Right cardiac atrium (tissue), 5 donors: ENCODE measurements at regions of chr5 and their contacts with region 1.

Region 1: DNA sequence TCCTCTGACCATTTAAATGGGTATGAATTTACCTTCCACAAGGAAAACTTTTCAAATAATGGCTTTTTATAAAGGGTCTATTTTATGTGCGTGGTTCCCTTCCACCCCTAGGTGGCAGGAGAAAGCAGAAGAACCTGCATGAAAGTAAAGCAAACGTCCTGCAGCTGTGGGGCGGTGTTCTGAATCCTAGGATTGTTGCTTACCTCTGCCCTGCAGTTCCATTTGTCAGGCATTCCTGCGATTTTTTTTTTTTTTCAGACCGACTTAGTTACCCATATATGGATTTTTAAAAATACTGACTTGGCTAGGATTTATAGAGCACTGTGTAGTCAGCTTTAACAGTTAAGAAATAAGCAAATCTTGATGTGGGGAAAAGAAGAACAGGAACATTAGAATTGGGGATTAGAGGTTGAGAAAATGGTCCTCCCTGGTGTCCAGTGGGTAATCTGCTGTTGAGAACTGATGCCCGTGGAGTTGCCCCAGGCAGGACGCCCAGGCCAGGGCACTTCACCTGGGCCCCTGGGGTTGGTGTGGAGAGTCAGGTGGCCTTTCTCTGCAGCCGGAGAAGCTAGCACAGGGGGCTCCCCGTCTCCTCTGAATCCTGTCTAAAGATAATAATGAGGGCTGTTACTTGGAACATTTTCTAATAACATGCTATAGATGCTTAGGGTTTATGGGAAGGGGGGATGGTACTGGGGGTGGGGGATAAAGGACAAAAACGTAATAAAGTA is 30.4 kb upstream of the LTC4S start:
- DNase-seq: peak; percentile 48 to 82 (median 59)
- ATAC-seq: peak; percentile 65 to 69
- H3K4me3 ChIP-seq: no peak overlapping the region
- H3K27ac ChIP-seq: no peak overlapping the region
- H3K4me1 ChIP-seq: peaks cover 18% of the 10 kb centered on the region
- H3K27me3 ChIP-seq: no peaks in the 10 kb centered on the region

Region 2: DNA sequence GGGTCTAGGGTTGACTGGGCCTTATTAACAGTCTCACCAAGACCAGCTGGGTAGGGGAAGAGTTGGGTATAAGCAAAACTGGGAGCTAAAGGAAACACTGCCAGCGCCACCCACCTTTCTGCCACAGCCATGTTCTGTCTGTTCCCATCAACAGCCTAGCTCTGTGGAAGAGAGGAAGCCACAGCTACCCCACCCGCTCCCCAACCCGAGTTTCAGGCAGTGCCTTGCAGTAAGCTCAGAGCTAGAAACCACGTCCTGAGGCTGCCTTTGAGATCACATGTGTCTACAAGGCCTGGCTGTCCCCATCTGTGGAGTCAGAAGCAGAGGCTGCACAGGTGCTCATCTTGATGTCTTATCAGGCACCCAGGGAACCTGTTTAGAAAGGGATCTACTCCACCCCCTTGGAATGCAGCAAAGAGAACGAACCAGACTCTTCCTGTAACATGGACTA is 155.2 kb before region 1 on chr5:
- intact Hi-C with region 1: no loop called
- DNase-seq: peak in 1 of 3 donors; percentile 34
- ATAC-seq: peak in 1 of 2 donors; percentile 3
- H3K4me3 ChIP-seq: no peak overlapping the region
- H3K27ac ChIP-seq: no peak overlapping the region
- H3K4me1 ChIP-seq: peaks cover 6% of the 10 kb centered on the region
- H3K27me3 ChIP-seq: no peaks in the 10 kb centered on the region

Region 3: DNA sequence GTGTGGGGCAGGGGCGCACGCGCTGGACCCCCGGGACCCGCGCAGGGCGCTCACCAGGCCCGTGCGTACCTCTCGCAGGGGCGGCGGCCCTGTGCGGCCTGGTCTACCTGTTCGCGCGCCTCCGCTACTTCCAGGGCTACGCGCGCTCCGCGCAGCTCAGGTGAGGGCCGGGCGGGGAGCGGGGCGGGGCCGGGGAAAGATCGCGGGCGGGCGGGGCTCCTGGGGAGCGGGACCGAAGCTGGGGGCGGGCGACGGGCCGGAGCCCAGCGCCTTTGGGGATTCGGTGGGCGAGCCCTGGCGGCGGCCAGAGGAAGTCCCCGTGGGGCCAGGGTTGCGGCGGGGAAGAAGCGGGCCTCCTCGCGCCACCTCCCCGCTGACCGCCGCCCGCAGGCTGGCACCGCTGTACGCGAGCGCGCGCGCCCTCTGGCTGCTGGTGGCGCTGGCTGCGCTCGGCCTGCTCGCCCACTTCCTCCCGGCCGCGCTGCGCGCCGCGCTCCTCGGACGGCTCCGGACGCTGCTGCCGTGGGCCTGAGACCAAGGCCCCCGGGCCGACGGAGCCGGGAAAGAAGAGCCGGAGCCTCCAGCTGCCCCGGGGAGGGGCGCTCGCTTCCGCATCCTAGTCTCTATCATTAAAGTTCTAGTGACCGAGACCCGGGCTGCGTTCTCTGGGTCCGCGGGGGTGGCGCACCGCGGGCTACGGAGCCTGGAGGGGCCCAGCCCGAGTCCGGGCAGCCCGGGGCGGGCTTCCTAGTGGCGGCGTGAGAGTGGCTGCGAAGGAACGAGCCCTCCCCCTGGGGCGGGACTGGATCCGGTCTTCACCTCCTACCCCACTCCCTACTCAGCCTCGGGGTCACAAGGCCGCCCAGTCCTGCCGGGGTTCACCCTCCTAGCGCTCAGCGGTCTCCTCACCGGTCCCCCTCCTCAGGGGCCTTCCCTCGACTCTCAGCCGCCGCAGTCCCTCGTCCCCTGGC is 32.8 kb after region 1 on chr5:
- intact Hi-C with region 1: loop called in 2 of 4 experiments (anchors 1 to 5 kb)
- DNase-seq: peak; percentile 87 to 94 (median 93)
- ATAC-seq: peak; percentile 62 to 68
- H3K4me3 ChIP-seq: peak overlapping the region; percentile 57
- H3K27ac ChIP-seq: peak overlapping the region; percentile 10
- H3K4me1 ChIP-seq: peaks cover 16% of the 10 kb centered on the region
- H3K27me3 ChIP-seq: no peaks in the 10 kb centered on the region

Region 4: DNA sequence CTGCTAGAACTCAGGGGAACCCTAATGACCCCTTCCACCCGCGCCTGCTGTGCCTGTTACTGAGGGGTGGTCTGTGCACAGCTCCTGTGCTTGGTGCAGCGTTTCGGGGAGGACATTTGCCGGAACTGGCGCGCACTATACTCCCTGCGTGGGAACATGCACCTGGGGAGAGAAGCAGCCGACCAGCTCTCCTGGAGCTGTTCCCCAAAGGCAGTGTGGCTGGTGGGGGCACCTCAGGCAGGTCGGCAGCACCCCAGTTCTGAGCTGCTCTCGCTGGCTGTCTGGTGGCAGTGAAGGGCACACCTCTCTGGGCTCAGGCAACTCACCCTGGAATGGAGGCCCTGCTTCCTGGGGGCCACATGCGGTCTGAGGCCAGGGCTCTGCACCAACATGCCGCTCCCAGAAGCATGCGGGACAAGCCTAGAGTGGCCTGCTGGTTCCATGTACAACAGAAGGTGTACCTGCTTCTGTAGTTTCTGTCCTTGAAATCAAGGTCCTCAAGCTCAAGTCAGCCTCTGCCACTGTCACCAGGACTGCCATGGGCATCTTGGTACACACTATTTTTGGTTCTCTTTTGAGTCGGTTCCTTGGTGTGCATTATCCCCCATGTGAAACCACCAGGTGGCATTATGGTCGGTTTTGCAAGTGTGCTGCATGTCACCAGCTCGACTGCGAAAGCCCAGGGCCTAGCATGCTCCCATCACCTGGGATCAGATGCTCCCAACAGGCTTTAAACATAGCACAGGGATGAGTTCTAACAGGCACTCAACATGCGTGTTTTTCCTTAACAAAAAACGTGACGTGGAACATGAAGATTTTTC is 103.1 kb after region 1 on chr5:
- intact Hi-C with region 1: loop called in 1 of 4 experiments (anchors 10 kb)
- DNase-seq: no peak
- ATAC-seq: no peak
- H3K4me3 ChIP-seq: no peak overlapping the region
- H3K27ac ChIP-seq: no peak overlapping the region
- H3K4me1 ChIP-seq: no peaks in the 10 kb centered on the region
- H3K27me3 ChIP-seq: no peaks in the 10 kb centered on the region

Region 5: GRCh38 chr5:180575571-180575970 is 812.2 kb after region 1 on chr5:
- intact Hi-C with region 1: no loop called
- DNase-seq: no peak
- ATAC-seq: no peak
- H3K4me3 ChIP-seq: no peak overlapping the region
- H3K27ac ChIP-seq: no peak overlapping the region
- H3K4me1 ChIP-seq: no peaks in the 10 kb centered on the region
- H3K27me3 ChIP-seq: no peaks in the 10 kb centered on the region